ENCODE measurements at regions of chr2 and their contacts with region 1.

Region 1: DNA sequence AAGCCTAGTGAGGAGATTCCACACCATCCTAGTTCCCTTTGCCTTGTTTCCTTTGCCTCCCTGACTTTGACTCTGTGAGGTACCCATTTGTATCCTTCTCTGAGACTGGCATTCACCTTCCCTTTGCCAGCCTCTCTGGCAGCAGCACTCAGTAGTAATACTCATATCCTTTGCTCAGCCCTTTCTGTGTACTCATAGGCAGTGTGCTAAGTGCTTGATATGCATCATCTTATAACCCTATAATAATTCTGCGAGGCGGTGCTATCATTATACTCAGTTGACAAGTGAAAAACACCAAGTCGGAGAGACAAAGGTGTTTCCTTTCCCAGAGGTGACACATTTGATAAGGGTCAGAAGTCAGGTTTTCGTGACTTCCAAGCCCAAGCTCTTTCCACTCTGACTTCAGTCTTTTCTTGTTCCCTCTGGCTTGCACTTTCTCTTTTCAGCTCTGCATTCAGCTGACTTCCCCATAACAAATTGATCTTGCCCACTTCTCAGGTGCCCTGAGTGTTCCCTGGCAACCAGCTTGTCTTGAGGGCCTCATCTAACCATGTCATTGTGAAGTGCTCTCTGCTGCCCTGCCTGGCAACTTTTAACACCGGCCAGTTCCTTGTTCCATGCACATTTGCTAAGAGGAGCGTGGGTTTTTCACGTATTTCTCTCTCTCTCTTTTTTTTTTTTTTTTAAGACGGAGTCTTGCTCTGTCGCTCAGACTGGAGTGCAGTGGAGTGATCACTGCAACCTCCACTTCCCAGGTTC is 94.5 kb upstream of the UPP2 start:
- DNase-seq: no peak
- ATAC-seq: no peak
- H3K4me3 ChIP-seq: no peak overlapping the region
- H3K27ac ChIP-seq: no peak overlapping the region
- H3K4me1 ChIP-seq: no peaks in the 10 kb centered on the region
- H3K27me3 ChIP-seq: no peaks in the 10 kb centered on the region

Region 2: GRCh38 chr2:157279331-157279730 is 727.8 kb before region 1 on chr2:
- intact Hi-C with region 1: no loop called
- DNase-seq: no peak
- ATAC-seq: no peak
- H3K4me3 ChIP-seq: no peak overlapping the region
- H3K27ac ChIP-seq: no peak overlapping the region
- H3K4me1 ChIP-seq: no peaks in the 10 kb centered on the region
- H3K27me3 ChIP-seq: no peaks in the 10 kb centered on the region

Region 3: DNA sequence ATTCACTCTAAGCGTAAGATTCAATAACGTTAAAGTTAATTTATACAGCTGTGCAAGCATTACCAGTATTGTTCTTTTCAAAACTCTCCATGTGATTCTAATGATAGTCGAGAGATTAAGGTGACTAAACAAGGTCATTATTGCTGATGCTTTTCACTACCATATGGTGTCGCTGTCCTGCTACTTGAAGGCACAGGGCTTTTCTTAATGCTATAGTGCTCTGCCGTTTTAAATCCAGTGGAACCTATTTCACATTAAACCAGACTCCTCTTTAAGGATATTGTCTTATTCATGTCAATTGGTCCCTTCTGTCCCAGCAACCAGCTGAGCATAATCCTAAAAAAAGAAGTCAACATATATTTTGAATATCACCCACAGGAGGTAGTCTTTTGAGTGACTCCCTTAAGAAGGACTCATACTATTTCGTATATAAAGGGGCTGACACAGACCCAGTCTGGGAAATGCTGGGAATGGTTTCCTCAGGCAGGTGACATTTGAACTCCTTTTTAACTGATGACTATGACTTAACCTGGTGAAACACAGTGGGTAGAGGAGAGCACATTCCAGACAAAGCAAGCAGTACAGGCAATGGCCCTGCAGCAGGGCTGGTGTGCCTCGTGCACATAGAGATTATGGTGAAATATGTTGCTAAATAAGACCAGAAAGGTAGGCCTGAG is 509.4 kb before region 1 on chr2:
- intact Hi-C with region 1: loop called (anchors 5 kb)
- DNase-seq: no peak
- ATAC-seq: no peak
- H3K4me3 ChIP-seq: no peak overlapping the region
- H3K27ac ChIP-seq: no peak overlapping the region
- H3K4me1 ChIP-seq: no peaks in the 10 kb centered on the region
- H3K27me3 ChIP-seq: no peaks in the 10 kb centered on the region

Region 4: GRCh38 chr2:157777427-157777826 is 229.7 kb before region 1 on chr2:
- intact Hi-C with region 1: loop called (anchors 2 kb)
- DNase-seq: peak in 1 of 2 donors; percentile 53
- ATAC-seq: no peak
- H3K4me3 ChIP-seq: no peak overlapping the region
- H3K27ac ChIP-seq: no peak overlapping the region
- H3K4me1 ChIP-seq: peaks cover 0 to 1% of the 10 kb centered on the region in 2 donors
- H3K27me3 ChIP-seq: no peaks in the 10 kb centered on the region

Region 5: DNA sequence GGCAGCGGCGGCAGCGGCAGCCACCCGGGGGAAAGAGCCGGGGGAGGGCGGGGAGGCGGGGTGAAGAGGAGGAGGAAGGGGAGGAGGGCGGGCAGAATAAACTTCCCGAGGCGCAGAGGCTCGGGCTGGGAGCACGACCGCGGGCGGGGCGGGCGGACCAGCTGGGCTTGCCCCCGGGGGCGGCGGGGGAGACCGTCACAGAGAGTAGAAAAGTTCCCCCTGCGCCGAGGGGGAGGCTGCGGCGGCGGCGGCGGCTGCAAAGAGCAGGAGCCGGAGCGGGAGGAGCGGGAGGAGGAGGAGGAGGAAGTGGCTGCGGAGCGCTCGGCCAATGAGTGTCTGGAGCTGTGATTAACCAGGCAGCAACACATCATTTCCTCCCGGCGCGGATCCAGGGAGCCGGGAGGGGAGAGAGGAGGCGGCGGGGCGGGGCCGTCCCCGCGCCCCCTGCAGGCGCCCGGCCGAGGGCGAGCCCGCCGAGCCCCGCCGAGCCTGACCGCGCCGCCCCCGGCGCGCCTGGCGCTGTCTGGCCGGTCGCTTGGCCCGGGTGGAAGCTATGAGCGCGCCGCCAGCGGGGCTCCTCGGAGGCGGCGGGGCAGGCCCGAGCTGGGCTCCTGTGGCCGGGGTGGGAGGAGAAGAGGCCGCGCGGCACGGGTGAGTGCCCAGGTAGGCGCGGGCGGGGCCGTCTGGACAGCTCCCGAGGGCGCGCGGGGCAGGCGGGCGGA is 130.9 kb before region 1 on chr2 and contains the start of gene ACVR1:
- intact Hi-C with region 1: loop called in 1 of 2 experiments (anchors 10 kb)
- DNase-seq: peak; percentile 98
- ATAC-seq: peak; percentile 95
- H3K4me3 ChIP-seq: peak within 1 kb of the TSS; percentile 80 to 99
- H3K27ac ChIP-seq: peak within 1 kb of the TSS; percentile 79 to 91
- H3K4me1 ChIP-seq: peaks cover 4 to 12% of the 10 kb centered on the region in 2 donors
- H3K27me3 ChIP-seq: no peaks in the 10 kb centered on the region
- total RNA-seq, gene ACVR1: 47.8 to 53.4 TPM